HepG2 (cell line): ENCODE measurements at regions of chr1 and their contacts with region 1.

Region 1: DNA sequence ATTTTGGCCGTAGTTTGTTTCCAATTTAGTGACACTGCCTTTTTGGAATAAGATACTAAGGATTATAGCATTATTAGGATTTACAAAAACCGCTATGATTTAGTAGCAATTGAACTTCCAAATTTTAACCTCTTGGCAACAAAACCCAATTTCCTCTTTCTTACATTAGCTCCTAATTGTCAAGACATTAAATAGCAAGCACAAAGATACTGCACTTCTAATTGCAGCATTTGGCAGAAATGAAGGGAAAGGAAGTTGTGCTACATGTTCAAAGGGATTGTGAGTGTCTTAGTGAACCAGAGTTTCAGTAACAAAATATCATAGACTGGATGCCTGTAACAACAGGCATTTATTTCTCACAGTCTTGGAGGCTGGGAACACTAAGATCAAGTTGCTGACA is 99.9 kb downstream of the NUF2 start:
- DNase-seq: no peak
- ATAC-seq: no peak
- H3K4me3 ChIP-seq: no peak overlapping the region
- H3K27ac ChIP-seq: no peak overlapping the region
- H3K4me1 ChIP-seq: no peaks in the 10 kb centered on the region
- H3K27me3 ChIP-seq: no peaks in the 10 kb centered on the region
- CTCF ChIP-seq: no peak
- EP300 ChIP-seq: no peak
- POLR2A ChIP-seq: no peak
- RAD21 ChIP-seq: no peak

Region 2: GRCh38 chr1:163395790-163396189 is 25.9 kb before region 1 on chr1:
- CTCF ChIA-PET with region 1: no interaction called
- POLR2A ChIA-PET with region 1: no interaction called
- in situ Hi-C with region 1: no loop called
- intact Hi-C with region 1: no loop called
- DNase-seq: no peak
- ATAC-seq: no peak
- H3K4me3 ChIP-seq: no peak overlapping the region
- H3K27ac ChIP-seq: no peak overlapping the region
- H3K4me1 ChIP-seq: no peaks in the 10 kb centered on the region
- H3K27me3 ChIP-seq: no peaks in the 10 kb centered on the region; a peak in 1 of 5 replicates
- CTCF ChIP-seq: no peak
- EP300 ChIP-seq: no peak
- POLR2A ChIP-seq: no peak
- RAD21 ChIP-seq: no peak

Region 3: GRCh38 chr1:163450986-163451385 is 29.3 kb after region 1 on chr1:
- CTCF ChIA-PET with region 1: no interaction called
- POLR2A ChIA-PET with region 1: no interaction called
- in situ Hi-C with region 1: no loop called
- intact Hi-C with region 1: loop called (anchors 2 kb)
- DNase-seq: no peak
- ATAC-seq: no peak
- H3K4me3 ChIP-seq: no peak overlapping the region
- H3K27ac ChIP-seq: no peak overlapping the region
- H3K4me1 ChIP-seq: no peaks in the 10 kb centered on the region
- H3K27me3 ChIP-seq: no peaks in the 10 kb centered on the region
- CTCF ChIP-seq: no peak
- EP300 ChIP-seq: no peak
- POLR2A ChIP-seq: no peak
- RAD21 ChIP-seq: no peak